ENCODE measurements at regions of chr1 and their contacts with region 1.

Region 1: DNA sequence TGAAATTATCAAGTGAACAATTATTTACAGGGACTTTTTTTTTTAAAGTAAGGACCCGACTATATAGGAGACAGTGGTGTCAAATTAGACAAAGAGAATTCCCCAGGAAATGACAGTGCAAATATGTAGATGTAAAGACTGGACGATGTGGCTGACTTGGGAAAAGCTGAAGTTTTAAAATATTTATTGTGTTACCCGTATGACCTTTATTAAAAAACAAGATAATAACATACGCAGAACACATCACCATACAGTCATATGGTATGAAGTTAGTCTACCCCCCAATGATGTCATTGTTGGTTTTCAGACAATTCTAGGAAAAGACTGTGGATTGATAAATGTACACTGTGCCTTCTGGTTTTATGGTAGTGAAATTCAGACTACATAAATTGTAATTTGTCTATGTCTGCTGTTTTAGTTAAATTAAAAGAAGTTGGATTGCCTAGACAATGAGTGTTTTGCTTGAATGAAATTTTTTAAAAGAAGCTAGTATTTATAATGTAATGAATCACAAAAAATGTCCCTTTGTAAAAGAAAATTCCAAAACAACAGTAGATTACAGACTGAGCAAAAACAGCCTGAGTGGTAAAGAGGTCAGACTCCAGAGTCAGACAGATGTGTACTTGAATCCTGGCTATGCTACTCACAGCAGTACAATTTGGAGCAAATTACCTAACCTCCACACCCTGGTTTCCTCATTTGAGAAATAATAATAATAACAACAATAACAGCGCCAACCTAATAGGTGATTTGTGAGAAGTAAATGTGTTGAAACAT is 15.5 kb upstream of the PDC start:
- DNase-seq: no peak
- H3K4me3 Mint-ChIP-seq: no peak overlapping the region
- H3K27ac Mint-ChIP-seq: no peak overlapping the region
- H3K4me1 Mint-ChIP-seq: no peaks in the 10 kb centered on the region
- H3K27me3 Mint-ChIP-seq: no peaks in the 10 kb centered on the region

Region 2: DNA sequence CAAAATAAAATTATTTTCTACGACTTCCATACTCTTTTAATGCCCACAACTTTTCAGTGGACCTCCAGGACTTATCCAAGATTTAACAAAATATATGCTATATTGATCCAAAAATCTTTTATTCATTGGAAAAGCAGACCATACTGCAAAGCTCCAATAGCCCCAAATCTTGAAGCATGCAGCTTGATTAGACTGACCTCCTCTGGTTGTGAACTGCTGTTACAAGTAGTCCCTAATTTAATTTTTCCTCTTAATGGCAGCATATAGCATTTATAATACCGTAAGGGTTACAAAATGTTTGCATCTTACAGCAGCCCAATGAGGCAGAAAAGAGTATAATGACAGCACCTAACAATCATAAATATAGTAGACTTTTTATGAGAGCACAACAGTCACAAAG is 151.2 kb before region 1 on chr1:
- CTCF ChIA-PET with region 1: no interaction called
- POLR2A ChIA-PET with region 1: no interaction called
- intact Hi-C with region 1: no loop called
- DNase-seq: no peak
- H3K4me3 Mint-ChIP-seq: no peak overlapping the region
- H3K27ac Mint-ChIP-seq: no peak overlapping the region
- H3K4me1 Mint-ChIP-seq: peaks cover 5% of the 10 kb centered on the region
- H3K27me3 Mint-ChIP-seq: no peaks in the 10 kb centered on the region

Region 3: DNA sequence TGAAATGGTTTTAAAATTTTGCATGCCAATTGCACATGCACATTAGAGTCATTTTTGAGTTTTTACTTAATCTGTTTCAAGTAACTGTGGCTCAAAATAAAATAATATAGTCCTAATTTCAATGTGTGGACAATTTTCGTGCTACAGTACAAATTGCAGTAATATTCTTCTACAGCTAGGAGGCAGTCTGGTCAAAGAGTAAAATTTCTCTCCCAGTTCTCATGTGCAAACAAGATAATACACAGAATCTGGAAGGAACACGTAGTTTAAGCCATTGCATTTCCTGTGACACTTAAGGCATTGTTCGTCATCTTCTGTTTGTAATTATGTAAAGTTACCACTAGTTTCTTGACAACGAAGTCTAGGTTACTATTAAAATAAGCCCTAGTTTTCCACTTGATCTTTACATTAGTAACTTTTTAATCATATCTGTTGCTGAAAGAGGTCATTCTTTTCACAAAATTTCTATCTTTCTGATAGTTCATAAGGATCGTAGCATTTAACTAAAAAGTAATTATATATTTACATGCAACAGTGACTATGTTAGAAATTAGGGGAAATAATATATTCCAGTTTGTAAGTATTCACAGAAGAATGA is 71.9 kb before region 1 on chr1:
- CTCF ChIA-PET with region 1: interaction called, 3 read pairs
- POLR2A ChIA-PET with region 1: no interaction called
- intact Hi-C with region 1: loop called (anchors 5 kb)
- DNase-seq: no peak
- H3K4me3 Mint-ChIP-seq: no peak overlapping the region
- H3K27ac Mint-ChIP-seq: no peak overlapping the region
- H3K4me1 Mint-ChIP-seq: no peaks in the 10 kb centered on the region
- H3K27me3 Mint-ChIP-seq: no peaks in the 10 kb centered on the region

Region 4: GRCh38 chr1:186442651-186443114 is 33.8 kb before region 1 on chr1:
- CTCF ChIA-PET with region 1: no interaction called
- POLR2A ChIA-PET with region 1: no interaction called
- intact Hi-C with region 1: no loop called
- DNase-seq: no peak
- H3K4me3 Mint-ChIP-seq: no peak overlapping the region
- H3K27ac Mint-ChIP-seq: no peak overlapping the region
- H3K4me1 Mint-ChIP-seq: peaks cover 15% of the 10 kb centered on the region
- H3K27me3 Mint-ChIP-seq: no peaks in the 10 kb centered on the region

Region 5: DNA sequence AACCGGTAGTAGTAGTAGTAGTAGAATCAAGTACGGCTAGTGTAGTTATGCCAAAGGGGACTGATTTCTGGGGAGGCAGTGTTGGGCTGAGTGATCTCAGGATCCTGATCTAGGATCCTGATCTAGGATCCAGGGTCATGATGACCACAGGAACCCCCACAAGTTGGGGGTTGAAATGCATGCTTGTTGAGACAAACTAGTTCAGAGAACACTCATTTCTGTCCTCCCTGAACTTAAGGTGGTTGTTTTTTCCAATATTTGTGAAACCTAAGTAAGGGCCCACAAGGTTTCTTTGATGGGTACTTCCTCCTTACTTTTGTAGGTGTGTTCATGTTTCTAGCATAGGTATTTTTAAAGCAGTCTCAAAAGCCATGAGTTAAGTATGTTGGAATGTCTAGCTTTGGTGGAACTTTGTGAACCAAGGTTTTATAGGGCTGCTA is 18.4 kb after region 1 on chr1:
- CTCF ChIA-PET with region 1: no interaction called
- POLR2A ChIA-PET with region 1: no interaction called
- intact Hi-C with region 1: no loop called
- DNase-seq: no peak
- H3K4me3 Mint-ChIP-seq: no peak overlapping the region
- H3K27ac Mint-ChIP-seq: no peak overlapping the region
- H3K4me1 Mint-ChIP-seq: no peaks in the 10 kb centered on the region
- H3K27me3 Mint-ChIP-seq: no peaks in the 10 kb centered on the region